HepG2 (cell line): ENCODE measurements at regions of chr2 and their contacts with region 1.

Region 1: GRCh38 chr2:241508240-241509154 is at the start of gene STK25:
- DNase-seq: peak; percentile 97
- ATAC-seq: peak; percentile 91
- H3K4me3 ChIP-seq: peak within 1 kb of the TSS; percentile 85 to 98 (median 89)
- H3K27ac ChIP-seq: peak within 1 kb of the TSS; percentile 70
- H3K4me1 ChIP-seq: peaks cover 62% of the 10 kb centered on the region
- H3K27me3 ChIP-seq: no peaks in the 10 kb centered on the region
- CTCF ChIP-seq: no peak; the same call in 1 of the 2 replicates
- EP300 ChIP-seq: peak in 1 of 2 experiments; percentile 35; a peak in 1 of 4 replicates
- POLR2A ChIP-seq: peak in 1 of 2 experiments; percentile 57; a peak in 2 of 4 replicates
- RAD21 ChIP-seq: no peak; the same call in 1 of the 2 replicates
- total RNA-seq, gene STK25: 123 and 177 TPM in 2 replicates

Region 2: GRCh38 chr2:241391892-241392665 is 116.4 kb before region 1 on chr2:
- CTCF ChIA-PET with region 1: no interaction called
- POLR2A ChIA-PET with region 1: no interaction called
- in situ Hi-C with region 1: no loop called
- intact Hi-C with region 1: no loop called
- DNase-seq: peak; percentile 73
- ATAC-seq: peak; percentile 99
- H3K4me3 ChIP-seq: no peak overlapping the region
- H3K27ac ChIP-seq: no peak overlapping the region
- H3K4me1 ChIP-seq: no peaks in the 10 kb centered on the region
- H3K27me3 ChIP-seq: no peaks in the 10 kb centered on the region
- CTCF ChIP-seq: peak; percentile 69
- EP300 ChIP-seq: no peak
- POLR2A ChIP-seq: no peak
- RAD21 ChIP-seq: peak; percentile 64

Region 3: DNA sequence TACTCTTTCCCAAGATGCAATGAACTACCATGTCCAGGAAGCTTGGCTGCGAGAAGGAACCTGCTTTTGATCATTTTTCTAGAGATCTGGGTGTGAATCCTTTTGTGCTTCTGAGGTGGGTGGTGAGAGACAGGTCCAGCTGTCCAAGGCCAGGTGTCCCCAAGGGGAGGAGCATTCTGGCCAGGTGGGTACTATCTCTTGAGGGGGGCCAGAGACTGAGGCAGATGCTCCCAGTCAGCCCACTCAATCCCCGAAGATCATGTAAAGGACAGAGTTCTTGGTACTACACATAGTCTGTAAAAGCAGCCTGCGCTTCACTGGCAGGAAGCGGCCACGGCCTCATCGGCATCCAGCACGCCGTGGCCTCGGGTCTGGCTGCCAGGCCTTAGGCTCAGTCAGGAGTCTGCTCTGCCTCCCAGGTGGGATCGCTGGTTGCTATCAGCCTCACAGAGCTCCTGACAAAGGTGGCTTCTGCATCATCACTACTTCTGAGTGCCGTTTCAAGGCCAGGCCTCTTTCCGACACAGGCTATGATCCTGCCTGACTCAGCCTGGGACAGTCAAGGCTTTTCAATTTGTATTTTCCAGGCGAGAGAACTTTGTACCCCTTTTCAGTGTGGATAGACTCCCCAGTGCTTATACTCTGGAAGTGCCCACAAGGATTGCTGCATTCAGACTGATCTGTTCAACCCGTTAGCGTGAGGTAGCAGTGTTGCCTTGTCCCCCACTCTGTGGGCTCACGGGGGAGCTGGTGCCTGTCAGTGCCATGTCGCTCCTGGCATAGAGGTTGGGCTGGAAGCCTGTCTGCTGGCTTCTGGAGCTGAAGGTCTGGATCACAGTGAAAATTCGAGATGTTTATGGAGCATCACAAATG is 29.2 kb before region 1 on chr2:
- CTCF ChIA-PET with region 1: no interaction called
- POLR2A ChIA-PET with region 1: interaction called, 11 read pairs
- in situ Hi-C with region 1: no loop called
- intact Hi-C with region 1: no loop called
- DNase-seq: peak; percentile 90
- ATAC-seq: peak; percentile 93
- H3K4me3 ChIP-seq: peak overlapping the region in 2 of 3 experiments; percentile 4 to 40; a peak in 2 of 6 replicates
- H3K27ac ChIP-seq: peak overlapping the region; percentile 67
- H3K4me1 ChIP-seq: peaks cover 29% of the 10 kb centered on the region
- H3K27me3 ChIP-seq: no peaks in the 10 kb centered on the region
- CTCF ChIP-seq: no peak
- EP300 ChIP-seq: no peak
- POLR2A ChIP-seq: peak in 1 of 2 experiments; percentile 61; a peak in 2 of 4 replicates
- RAD21 ChIP-seq: peak; percentile 54; the same call in 1 of the 2 replicates

Region 4: GRCh38 chr2:241598480-241598879 is 90.0 kb after region 1 on chr2:
- CTCF ChIA-PET with region 1: interaction called, 3 read pairs
- POLR2A ChIA-PET with region 1: interaction called, 3 read pairs
- in situ Hi-C with region 1: no loop called
- intact Hi-C with region 1: loop called (anchors 1 kb)
- DNase-seq: peak; percentile 45
- ATAC-seq: peak; percentile 72
- H3K4me3 ChIP-seq: no peak overlapping the region
- H3K27ac ChIP-seq: no peak overlapping the region
- H3K4me1 ChIP-seq: no peaks in the 10 kb centered on the region
- H3K27me3 ChIP-seq: no peaks in the 10 kb centered on the region
- CTCF ChIP-seq: peak; percentile 80
- EP300 ChIP-seq: no peak
- POLR2A ChIP-seq: no peak
- RAD21 ChIP-seq: no peak